CD4-positive, alpha-beta memory T cell (primary cell): ENCODE measurements at regions of chr1 and their contacts with region 1.

Region 1: GRCh38 chr1:53945433-53946251 is at the start of gene IFT25:
- DNase-seq: peak; percentile 97 to 100 (median 97)
- H3K4me3 ChIP-seq: peak within 1 kb of the TSS; percentile 63 to 87
- H3K4me3 Mint-ChIP-seq: peak within 1 kb of the TSS; percentile 93 to 99 (median 96)
- H3K27ac ChIP-seq: peak within 1 kb of the TSS; percentile 82
- H3K27ac Mint-ChIP-seq: peak within 1 kb of the TSS; percentile 85 to 98 (median 95)
- H3K4me1 ChIP-seq: peaks cover 44% of the 10 kb centered on the region
- H3K4me1 Mint-ChIP-seq: peaks cover 27 to 63% (median 46%) of the 10 kb centered on the region in 4 donors
- H3K27me3 ChIP-seq: no peaks in the 10 kb centered on the region
- H3K27me3 Mint-ChIP-seq: no peaks in the 10 kb centered on the region
- total RNA-seq, gene IFT25: 47.2 to 50.3 TPM

Region 2: GRCh38 chr1:53781654-53782053 is 164.0 kb before region 1 on chr1:
- CTCF ChIA-PET with region 1: no interaction called
- POLR2A ChIA-PET with region 1: no interaction called
- intact Hi-C with region 1: no loop called
- DNase-seq: no peak
- H3K4me3 ChIP-seq: no peak overlapping the region
- H3K4me3 Mint-ChIP-seq: no peak overlapping the region
- H3K27ac ChIP-seq: no peak overlapping the region
- H3K27ac Mint-ChIP-seq: no peak overlapping the region
- H3K4me1 ChIP-seq: no peaks in the 10 kb centered on the region
- H3K4me1 Mint-ChIP-seq: peaks cover 0 to 3% (median 1%) of the 10 kb centered on the region in 4 donors
- H3K27me3 ChIP-seq: no peaks in the 10 kb centered on the region
- H3K27me3 Mint-ChIP-seq: no peaks in the 10 kb centered on the region

Region 3: DNA sequence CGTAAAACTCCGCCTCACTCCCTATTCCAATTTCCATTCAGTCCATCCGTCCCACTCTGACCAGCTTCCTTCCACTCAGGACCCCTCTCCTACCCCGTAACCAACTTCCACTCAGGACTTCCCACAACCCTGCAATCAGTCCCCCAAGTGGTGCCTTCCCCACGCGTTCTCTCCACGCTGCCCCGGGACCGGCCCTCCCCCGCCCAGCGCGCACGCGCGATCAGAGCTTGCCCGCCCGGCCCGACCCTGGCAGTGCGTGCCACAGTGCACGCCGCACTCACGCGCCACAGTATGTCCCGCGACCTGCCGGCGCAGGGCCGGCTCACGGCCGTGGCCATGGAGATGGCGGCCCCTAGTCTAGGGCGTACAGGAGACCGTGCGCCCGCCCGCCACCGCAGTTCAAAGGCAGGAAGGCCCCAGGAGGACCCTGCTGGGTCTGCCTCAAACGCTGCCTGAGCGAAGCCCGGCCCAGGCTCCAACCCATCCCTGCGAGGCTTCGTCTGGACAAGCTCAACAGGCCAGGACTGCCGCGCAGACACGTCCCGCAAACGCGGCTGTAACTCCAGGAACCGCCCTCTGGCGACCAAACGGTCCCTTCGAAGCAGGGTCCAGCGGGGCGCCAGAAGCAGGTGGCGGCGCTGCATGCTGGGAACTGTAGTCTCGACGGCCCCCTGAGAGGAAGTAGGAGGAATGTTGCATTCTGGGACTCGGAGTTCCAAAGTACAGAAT is 107.6 kb before region 1 on chr1 and contains the start of gene NDC1:
- CTCF ChIA-PET with region 1: interaction called, 3 read pairs
- POLR2A ChIA-PET with region 1: interaction called, 18 read pairs
- intact Hi-C with region 1: loop called (anchors 1 kb)
- DNase-seq: peak; percentile 92 to 96 (median 93)
- H3K4me3 ChIP-seq: peak within 1 kb of the TSS; percentile 83 to 87
- H3K4me3 Mint-ChIP-seq: peak within 1 kb of the TSS; percentile 91 to 99 (median 98)
- H3K27ac ChIP-seq: peak within 1 kb of the TSS; percentile 95
- H3K27ac Mint-ChIP-seq: peak within 1 kb of the TSS; percentile 97 to 99 (median 98)
- H3K4me1 ChIP-seq: peaks cover 5% of the 10 kb centered on the region
- H3K4me1 Mint-ChIP-seq: peaks cover 15 to 38% (median 24%) of the 10 kb centered on the region in 4 donors
- H3K27me3 ChIP-seq: no peaks in the 10 kb centered on the region
- H3K27me3 Mint-ChIP-seq: peaks cover 0 to 2% of the 10 kb centered on the region in 2 donors
- total RNA-seq, gene NDC1: 10.9 to 11.0 TPM

Region 4: DNA sequence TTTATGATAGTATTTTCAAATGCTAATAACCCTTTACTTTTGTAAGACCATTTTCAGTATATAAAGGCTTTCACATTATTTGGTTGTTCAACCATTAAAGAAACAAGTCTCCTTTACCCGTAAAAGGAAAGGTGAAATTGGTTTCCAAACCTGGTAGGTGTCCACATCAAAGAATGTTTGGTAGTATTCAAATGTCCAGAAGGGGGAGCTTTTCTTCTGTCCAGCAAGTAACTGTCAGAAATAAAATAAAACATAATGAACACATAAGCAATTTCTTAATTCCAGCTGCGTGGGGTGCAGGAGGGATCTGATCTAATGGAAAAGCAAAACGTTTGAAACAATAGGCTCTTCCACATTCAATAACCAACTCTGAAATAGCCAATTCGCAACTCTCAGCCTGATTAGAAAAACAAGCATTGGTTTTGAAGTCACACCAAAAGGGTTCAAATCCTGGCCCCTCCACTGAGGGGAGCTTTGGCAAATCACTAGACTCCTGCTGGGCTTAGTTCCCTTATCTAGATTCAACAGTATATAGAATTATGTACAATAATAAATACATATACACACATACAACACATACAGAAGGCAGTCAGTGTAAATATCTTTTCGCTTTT is 67.0 kb before region 1 on chr1:
- CTCF ChIA-PET with region 1: interaction called, 9 read pairs
- POLR2A ChIA-PET with region 1: no interaction called
- intact Hi-C with region 1: loop called (anchors 2 kb)
- DNase-seq: peak in 4 of 5 donors; percentile 14 to 26 (median 23)
- H3K4me3 ChIP-seq: no peak overlapping the region
- H3K4me3 Mint-ChIP-seq: no peak overlapping the region
- H3K27ac ChIP-seq: no peak overlapping the region
- H3K27ac Mint-ChIP-seq: no peak overlapping the region
- H3K4me1 ChIP-seq: no peaks in the 10 kb centered on the region
- H3K4me1 Mint-ChIP-seq: peaks cover 2 to 8% (median 3%) of the 10 kb centered on the region in 4 donors
- H3K27me3 ChIP-seq: no peaks in the 10 kb centered on the region
- H3K27me3 Mint-ChIP-seq: no peaks in the 10 kb centered on the region

Region 5: GRCh38 chr1:53934170-53934765 is 11.4 kb before region 1 on chr1:
- CTCF ChIA-PET with region 1: interaction called, 3 read pairs
- POLR2A ChIA-PET with region 1: interaction called, 13 read pairs
- intact Hi-C with region 1: no loop called
- DNase-seq: no peak
- H3K4me3 ChIP-seq: no peak overlapping the region
- H3K4me3 Mint-ChIP-seq: no peak overlapping the region
- H3K27ac ChIP-seq: no peak overlapping the region
- H3K27ac Mint-ChIP-seq: no peak overlapping the region
- H3K4me1 ChIP-seq: no peaks in the 10 kb centered on the region
- H3K4me1 Mint-ChIP-seq: peaks cover under 1 to 16% (median 9%) of the 10 kb centered on the region in 4 donors
- H3K27me3 ChIP-seq: no peaks in the 10 kb centered on the region
- H3K27me3 Mint-ChIP-seq: no peaks in the 10 kb centered on the region

Region 6: DNA sequence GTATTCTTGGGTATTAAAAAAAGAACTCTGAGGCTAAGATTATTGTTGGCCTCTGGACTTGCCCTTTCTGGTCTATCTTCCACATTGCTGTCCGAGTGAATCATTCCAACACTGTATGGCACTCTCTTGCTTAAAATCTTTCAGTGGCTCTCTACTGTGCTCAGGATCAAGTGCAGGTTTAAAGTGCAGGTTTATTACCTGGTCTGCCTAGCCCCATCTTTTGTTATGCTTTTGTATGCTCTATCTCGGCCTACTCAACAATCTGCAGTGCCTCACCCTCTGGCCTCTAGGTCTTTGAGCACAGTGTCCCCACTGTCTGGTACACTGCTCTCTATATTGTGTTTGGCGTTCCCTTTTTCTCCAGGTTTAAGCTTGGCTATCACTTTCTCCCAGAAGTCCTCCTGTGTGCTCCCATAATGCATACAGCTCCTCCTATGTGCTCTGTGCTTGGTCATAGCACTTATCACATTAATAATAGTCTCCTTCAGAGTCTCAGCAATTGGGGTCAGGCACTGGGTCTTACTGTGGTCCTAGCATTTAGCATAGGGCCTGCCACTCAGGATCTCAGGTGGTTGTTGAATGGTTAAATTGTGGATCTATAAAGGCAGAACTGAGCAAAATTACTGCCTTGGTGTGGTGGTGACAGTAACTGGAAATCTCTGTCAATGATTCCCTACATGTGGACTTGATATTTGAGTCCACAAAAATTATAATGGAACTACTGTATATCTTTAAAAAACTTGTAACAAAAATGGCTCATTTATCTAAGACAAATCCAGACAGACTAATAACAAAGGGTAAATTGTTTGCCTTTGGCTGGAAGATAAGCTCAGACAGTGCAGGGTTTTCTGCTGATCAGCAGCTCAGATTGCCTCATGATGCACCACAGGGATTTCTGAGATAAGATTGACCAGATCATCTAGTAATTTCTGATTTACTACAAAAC is 82.9 kb after region 1 on chr1:
- CTCF ChIA-PET with region 1: no interaction called
- POLR2A ChIA-PET with region 1: no interaction called
- intact Hi-C with region 1: no loop called
- DNase-seq: no peak
- H3K4me3 ChIP-seq: no peak overlapping the region
- H3K4me3 Mint-ChIP-seq: no peak overlapping the region
- H3K27ac ChIP-seq: no peak overlapping the region
- H3K27ac Mint-ChIP-seq: peak overlapping the region in 4 of 7 donors; percentile 15 to 73 (median 38)
- H3K4me1 ChIP-seq: no peaks in the 10 kb centered on the region
- H3K4me1 Mint-ChIP-seq: no peaks in the 10 kb centered on the region
- H3K27me3 ChIP-seq: no peaks in the 10 kb centered on the region
- H3K27me3 Mint-ChIP-seq: no peaks in the 10 kb centered on the region

Region 7: DNA sequence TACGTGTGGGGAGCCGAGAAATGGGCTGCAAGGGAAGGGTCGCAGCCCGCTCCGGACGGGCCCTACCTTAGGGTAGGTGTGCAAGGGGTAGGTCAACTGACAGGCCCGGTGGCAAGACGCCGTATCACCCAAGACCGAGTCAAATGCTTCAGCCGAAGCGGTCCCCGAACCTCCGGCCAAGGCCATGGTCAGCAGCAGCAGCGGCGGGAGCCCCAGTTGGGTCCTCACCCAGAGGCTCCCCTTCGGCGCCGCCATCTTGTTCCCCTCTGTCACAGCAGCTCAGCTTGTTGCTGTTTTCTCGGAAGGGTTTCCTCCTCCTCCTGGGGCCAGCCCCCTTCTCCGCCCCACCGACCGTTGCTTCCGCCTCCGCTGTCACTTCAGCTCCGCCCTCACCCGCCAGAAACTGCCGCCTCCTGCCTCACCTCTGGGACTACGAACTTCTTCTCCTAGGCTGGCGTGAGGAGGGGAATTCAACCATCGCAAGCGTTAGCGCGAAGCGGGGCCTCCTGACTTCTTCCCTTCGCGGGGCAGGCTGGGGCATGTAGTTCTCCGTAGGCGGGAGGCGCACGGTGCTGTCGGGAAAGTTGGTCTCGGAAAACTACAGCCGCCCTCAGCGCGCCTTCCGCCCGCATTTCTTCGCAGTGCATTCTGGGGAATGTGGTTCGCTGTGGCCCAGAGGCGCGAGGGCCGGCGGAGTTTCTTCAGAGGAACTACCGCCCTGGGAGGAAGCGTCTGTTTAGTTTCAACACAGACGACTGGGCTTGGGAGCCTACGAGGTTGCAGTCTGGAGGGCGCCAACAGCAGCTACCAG is 107.5 kb after region 1 on chr1 and contains the starts of genes TCEANC2 and TMEM59:
- CTCF ChIA-PET with region 1: interaction called, 6 read pairs
- POLR2A ChIA-PET with region 1: interaction called, 25 read pairs
- intact Hi-C with region 1: loop called (anchors 1 kb)
- DNase-seq: peak; percentile 97 to 100 (median 99)
- H3K4me3 ChIP-seq: peak within 1 kb of the TSS; percentile 98 to 99
- H3K4me3 Mint-ChIP-seq: no peak within 1 kb of the TSS
- H3K27ac ChIP-seq: peak within 1 kb of the TSS; percentile 88
- H3K27ac Mint-ChIP-seq: no peak within 1 kb of the TSS
- H3K4me1 ChIP-seq: peaks cover 59% of the 10 kb centered on the region
- H3K4me1 Mint-ChIP-seq: peaks cover 23 to 49% (median 37%) of the 10 kb centered on the region in 4 donors
- H3K27me3 ChIP-seq: no peaks in the 10 kb centered on the region
- H3K27me3 Mint-ChIP-seq: no peaks in the 10 kb centered on the region
- total RNA-seq, gene TCEANC2: 12.1 to 13.1 TPM
- total RNA-seq, gene TMEM59: 212 to 222 TPM

Region 8: DNA sequence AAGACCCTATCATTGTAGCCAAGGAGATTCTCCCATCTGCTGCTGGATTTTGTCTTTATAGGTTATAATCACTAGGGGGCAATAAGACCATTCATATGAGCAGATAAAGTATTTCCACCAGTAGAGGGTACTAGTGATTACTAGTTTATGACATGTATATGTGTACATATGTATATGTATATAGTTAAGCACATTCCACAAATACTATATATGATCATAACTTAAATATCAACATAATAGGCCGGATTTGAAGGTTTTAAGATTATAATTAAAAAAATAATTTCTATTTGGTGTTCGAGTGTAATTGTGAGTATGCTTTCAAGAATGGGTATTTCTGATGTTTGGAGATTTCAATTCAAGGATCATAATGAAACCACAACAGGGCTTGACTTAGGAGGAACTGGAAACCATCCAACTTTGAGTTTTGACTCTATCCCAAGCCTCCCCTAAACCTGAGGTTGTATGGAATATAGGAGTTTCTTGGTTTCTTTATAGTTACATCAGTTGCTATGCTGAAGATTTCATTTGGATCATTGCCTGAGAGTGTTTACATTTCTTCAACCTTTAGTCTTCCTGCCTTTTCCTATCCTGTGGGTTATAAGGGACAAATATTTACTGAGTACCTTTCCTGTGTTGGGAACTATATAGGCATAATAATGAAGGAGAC is 124.7 kb after region 1 on chr1:
- CTCF ChIA-PET with region 1: no interaction called
- POLR2A ChIA-PET with region 1: no interaction called
- intact Hi-C with region 1: no loop called
- DNase-seq: peak in 4 of 5 donors; percentile 55 to 61 (median 56)
- H3K4me3 ChIP-seq: no peak overlapping the region
- H3K4me3 Mint-ChIP-seq: peak overlapping the region in 1 of 8 donors; percentile 0
- H3K27ac ChIP-seq: no peak overlapping the region
- H3K27ac Mint-ChIP-seq: peak overlapping the region in 1 of 7 donors; percentile 2
- H3K4me1 ChIP-seq: no peaks in the 10 kb centered on the region
- H3K4me1 Mint-ChIP-seq: peaks cover 0 to 2% (median 0%) of the 10 kb centered on the region in 4 donors
- H3K27me3 ChIP-seq: no peaks in the 10 kb centered on the region
- H3K27me3 Mint-ChIP-seq: no peaks in the 10 kb centered on the region

Region 9: GRCh38 chr1:54095546-54096226 is 150.0 kb after region 1 on chr1:
- CTCF ChIA-PET with region 1: no interaction called
- POLR2A ChIA-PET with region 1: no interaction called
- intact Hi-C with region 1: no loop called
- DNase-seq: no peak
- H3K4me3 ChIP-seq: no peak overlapping the region
- H3K4me3 Mint-ChIP-seq: no peak overlapping the region
- H3K27ac ChIP-seq: no peak overlapping the region
- H3K27ac Mint-ChIP-seq: no peak overlapping the region
- H3K4me1 ChIP-seq: no peaks in the 10 kb centered on the region
- H3K4me1 Mint-ChIP-seq: peaks cover 0 to 9% (median under 1%) of the 10 kb centered on the region in 4 donors
- H3K27me3 ChIP-seq: no peaks in the 10 kb centered on the region
- H3K27me3 Mint-ChIP-seq: no peaks in the 10 kb centered on the region